ENCODE measurements at regions of chr20 and their contacts with region 1.

Region 1: GRCh38 chr20:59170406-59171349 is 7.1 kb downstream of the ZNF831 start:
- DNase-seq: no peak
- H3K4me3 Mint-ChIP-seq: no peak overlapping the region
- H3K27ac Mint-ChIP-seq: no peak overlapping the region
- H3K4me1 Mint-ChIP-seq: peaks cover 72% of the 10 kb centered on the region
- H3K27me3 Mint-ChIP-seq: no peaks in the 10 kb centered on the region

Region 2: GRCh38 chr20:58839474-58839874 is 331.2 kb before region 1 on chr20:
- CTCF ChIA-PET with region 1: no interaction called
- POLR2A ChIA-PET with region 1: no interaction called
- DNase-seq: peak; percentile 38
- H3K4me3 Mint-ChIP-seq: no peak overlapping the region
- H3K27ac Mint-ChIP-seq: no peak overlapping the region
- H3K4me1 Mint-ChIP-seq: peaks cover 20% of the 10 kb centered on the region
- H3K27me3 Mint-ChIP-seq: peaks cover 71% of the 10 kb centered on the region

Region 3: GRCh38 chr20:59032023-59032712 is 138.5 kb before region 1 on chr20 and contains the start of gene ATP5F1E:
- CTCF ChIA-PET with region 1: no interaction called
- POLR2A ChIA-PET with region 1: no interaction called
- DNase-seq: peak; percentile 95
- H3K4me3 Mint-ChIP-seq: peak within 1 kb of the TSS; percentile 91
- H3K27ac Mint-ChIP-seq: peak within 1 kb of the TSS; percentile 91
- H3K4me1 Mint-ChIP-seq: peaks cover 71% of the 10 kb centered on the region
- H3K27me3 Mint-ChIP-seq: no peaks in the 10 kb centered on the region
- total RNA-seq, gene ATP5F1E: 98.1 to 101 TPM

Region 4: DNA sequence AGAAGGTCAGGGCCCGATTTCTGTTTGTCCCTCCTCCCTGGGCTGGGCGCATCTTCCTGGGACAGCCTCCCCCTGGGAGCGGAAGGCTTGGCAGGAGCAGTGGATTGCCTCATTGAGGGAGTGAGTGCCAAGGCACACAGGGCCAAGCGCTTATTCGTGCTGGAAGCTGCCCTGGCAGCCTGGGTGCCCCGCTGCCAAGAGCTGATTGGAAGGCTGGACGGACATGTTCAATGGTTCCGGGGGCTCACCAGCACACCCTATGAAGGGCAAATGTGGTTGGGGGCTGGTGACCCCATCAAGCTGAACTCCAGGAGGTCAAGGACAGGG is 17.4 kb before region 1 on chr20:
- CTCF ChIA-PET with region 1: interaction called, 15 read pairs
- POLR2A ChIA-PET with region 1: no interaction called
- DNase-seq: no peak
- H3K4me3 Mint-ChIP-seq: no peak overlapping the region
- H3K27ac Mint-ChIP-seq: no peak overlapping the region
- H3K4me1 Mint-ChIP-seq: peaks cover 69% of the 10 kb centered on the region
- H3K27me3 Mint-ChIP-seq: no peaks in the 10 kb centered on the region

Region 5: DNA sequence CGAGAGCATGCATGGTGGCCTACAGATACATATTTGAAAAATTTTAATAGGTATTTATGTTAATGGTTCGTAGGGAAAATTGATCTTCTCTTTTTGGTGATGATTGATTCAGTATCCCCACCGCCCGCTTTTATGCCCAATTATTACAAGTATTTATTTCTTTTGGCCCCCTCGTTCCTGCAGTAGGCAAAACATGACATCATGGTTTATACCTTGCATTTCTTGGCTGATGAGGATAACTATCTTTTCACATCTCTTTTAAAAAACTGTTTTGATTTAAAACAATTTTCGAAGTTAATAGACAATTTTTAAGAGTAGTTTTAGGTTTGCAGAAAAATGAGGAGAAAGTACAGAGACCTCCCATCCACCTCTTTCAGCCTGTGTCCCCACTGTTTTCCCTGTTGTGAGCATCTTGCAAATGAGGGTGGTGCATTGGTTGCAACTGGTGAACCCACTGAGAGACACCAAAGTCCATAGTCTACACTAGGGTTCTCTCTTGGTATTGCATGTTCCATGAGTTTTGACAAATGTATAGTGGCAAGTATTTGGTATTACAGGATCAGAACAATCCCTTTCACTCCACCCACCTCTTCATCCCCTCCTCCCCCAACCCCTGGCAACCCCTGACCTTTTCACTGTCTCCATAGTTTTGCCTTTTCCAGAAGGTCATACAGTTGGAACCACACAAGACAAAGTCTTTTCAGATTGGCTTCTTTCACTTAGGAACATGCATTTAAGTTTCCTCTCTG is 12.9 kb after region 1 on chr20:
- CTCF ChIA-PET with region 1: no interaction called
- POLR2A ChIA-PET with region 1: no interaction called
- DNase-seq: no peak
- H3K4me3 Mint-ChIP-seq: no peak overlapping the region
- H3K27ac Mint-ChIP-seq: no peak overlapping the region
- H3K4me1 Mint-ChIP-seq: peaks cover 35% of the 10 kb centered on the region
- H3K27me3 Mint-ChIP-seq: no peaks in the 10 kb centered on the region

Region 6: GRCh38 chr20:59242714-59243113 is 72.0 kb after region 1 on chr20:
- CTCF ChIA-PET with region 1: no interaction called
- POLR2A ChIA-PET with region 1: interaction called, 16 read pairs
- DNase-seq: peak; percentile 37
- H3K4me3 Mint-ChIP-seq: no peak overlapping the region
- H3K27ac Mint-ChIP-seq: no peak overlapping the region
- H3K4me1 Mint-ChIP-seq: peaks cover 11% of the 10 kb centered on the region
- H3K27me3 Mint-ChIP-seq: no peaks in the 10 kb centered on the region